ENCODE measurements at regions of chr21 and their contacts with region 1.

Region 1: DNA sequence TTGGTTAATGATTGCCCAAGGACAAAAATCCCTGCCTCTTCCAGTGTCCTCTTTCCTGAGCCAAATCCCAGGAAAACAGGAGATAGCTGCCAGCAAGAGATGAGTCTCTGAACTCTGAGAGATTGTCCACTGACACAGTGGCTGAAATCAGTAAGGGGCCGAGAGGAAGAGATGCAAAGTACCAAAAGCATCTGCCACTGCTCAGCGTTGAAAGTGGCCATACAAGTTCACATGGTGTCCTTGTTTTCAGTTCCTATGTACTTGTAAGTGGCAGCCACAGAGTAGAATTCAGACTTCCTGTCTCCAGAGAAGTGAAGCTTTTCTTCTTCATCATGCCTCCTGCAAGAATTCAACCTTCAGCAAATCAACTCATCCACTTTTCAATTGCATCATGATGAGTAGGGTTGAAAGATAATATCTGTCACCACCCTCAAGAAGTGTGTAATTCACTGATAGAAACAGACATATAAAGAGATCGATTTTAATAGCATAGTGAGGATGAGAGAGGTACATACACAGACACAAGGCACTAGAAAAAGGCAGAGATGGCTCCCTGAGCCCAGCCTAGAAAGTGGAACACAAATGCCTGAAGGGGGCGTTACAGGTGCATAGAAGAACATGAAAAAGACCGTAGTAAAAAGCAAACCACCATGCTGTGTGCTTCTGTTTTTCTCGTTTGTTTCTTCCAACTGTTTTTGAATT is 185.8 kb downstream of the MRPL39 start:
- DNase-seq: peak; percentile 86
- ATAC-seq: peak; percentile 80
- H3K4me3 ChIP-seq: peak overlapping the region in 2 of 5 experiments; percentile 6 to 48
- H3K4me3 Mint-ChIP-seq: peak overlapping the region; percentile 75
- H3K27ac ChIP-seq: peak overlapping the region; percentile 86 to 92
- H3K27ac Mint-ChIP-seq: peak overlapping the region; percentile 90
- H3K4me1 ChIP-seq: peaks cover 31 to 47% of the 10 kb centered on the region in 2 donors
- H3K4me1 Mint-ChIP-seq: peaks cover 46% of the 10 kb centered on the region
- H3K27me3 ChIP-seq: no peaks in the 10 kb centered on the region
- H3K27me3 Mint-ChIP-seq: no peaks in the 10 kb centered on the region
- CTCF ChIP-seq: peak; percentile 85

Region 2: GRCh38 chr21:25457411-25457810 is 35.9 kb after region 1 on chr21:
- CTCF ChIA-PET with region 1: no interaction called
- POLR2A ChIA-PET with region 1: no interaction called
- intact Hi-C with region 1: loop called (anchors 1 kb)
- DNase-seq: peak; percentile 88
- ATAC-seq: peak; percentile 82
- H3K4me3 ChIP-seq: peak overlapping the region in 1 of 5 experiments; percentile 44
- H3K4me3 Mint-ChIP-seq: peak overlapping the region; percentile 62
- H3K27ac ChIP-seq: peak overlapping the region; percentile 90 to 94
- H3K27ac Mint-ChIP-seq: peak overlapping the region; percentile 75
- H3K4me1 ChIP-seq: peaks cover 23 to 26% of the 10 kb centered on the region in 2 donors
- H3K4me1 Mint-ChIP-seq: peaks cover 45% of the 10 kb centered on the region
- H3K27me3 ChIP-seq: no peaks in the 10 kb centered on the region
- H3K27me3 Mint-ChIP-seq: no peaks in the 10 kb centered on the region
- CTCF ChIP-seq: no peak

Region 3: DNA sequence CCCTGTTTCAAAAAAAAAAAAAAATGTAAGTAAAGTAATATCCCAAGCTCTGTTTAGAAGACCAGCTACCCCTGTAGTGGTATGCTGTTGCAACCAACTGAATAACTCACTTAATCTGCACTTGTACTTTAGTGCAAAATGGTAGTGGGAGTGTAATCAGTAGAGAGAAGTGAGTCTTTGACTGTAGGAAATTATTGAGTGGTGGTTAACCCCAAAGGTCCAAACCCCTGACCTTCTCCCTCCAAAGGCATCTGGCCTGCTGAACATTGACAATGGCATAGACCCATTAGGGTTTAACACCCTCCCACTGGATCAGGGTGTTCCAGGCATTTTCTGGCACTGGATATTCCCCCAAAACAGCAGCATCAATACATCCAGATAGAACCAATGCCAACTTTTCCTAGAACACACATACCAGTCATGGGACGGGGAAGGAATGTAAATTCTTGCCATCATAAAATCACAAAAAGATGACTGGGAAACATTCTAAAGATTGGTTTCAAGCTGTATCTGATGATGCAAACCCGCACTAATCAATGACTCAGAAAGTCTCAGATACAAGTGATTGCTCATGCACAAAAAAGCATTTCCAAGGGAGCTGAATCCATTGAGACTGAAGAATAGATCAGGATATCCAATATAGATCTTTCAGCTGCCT is 75.5 kb after region 1 on chr21:
- CTCF ChIA-PET with region 1: no interaction called
- POLR2A ChIA-PET with region 1: no interaction called
- intact Hi-C with region 1: no loop called
- DNase-seq: no peak
- ATAC-seq: no peak
- H3K4me3 ChIP-seq: no peak overlapping the region
- H3K4me3 Mint-ChIP-seq: no peak overlapping the region
- H3K27ac ChIP-seq: no peak overlapping the region
- H3K27ac Mint-ChIP-seq: no peak overlapping the region
- H3K4me1 ChIP-seq: peaks cover 1 to 7% of the 10 kb centered on the region in 2 donors
- H3K4me1 Mint-ChIP-seq: peaks cover 19% of the 10 kb centered on the region
- H3K27me3 ChIP-seq: no peaks in the 10 kb centered on the region
- H3K27me3 Mint-ChIP-seq: no peaks in the 10 kb centered on the region
- CTCF ChIP-seq: no peak

Region 4: DNA sequence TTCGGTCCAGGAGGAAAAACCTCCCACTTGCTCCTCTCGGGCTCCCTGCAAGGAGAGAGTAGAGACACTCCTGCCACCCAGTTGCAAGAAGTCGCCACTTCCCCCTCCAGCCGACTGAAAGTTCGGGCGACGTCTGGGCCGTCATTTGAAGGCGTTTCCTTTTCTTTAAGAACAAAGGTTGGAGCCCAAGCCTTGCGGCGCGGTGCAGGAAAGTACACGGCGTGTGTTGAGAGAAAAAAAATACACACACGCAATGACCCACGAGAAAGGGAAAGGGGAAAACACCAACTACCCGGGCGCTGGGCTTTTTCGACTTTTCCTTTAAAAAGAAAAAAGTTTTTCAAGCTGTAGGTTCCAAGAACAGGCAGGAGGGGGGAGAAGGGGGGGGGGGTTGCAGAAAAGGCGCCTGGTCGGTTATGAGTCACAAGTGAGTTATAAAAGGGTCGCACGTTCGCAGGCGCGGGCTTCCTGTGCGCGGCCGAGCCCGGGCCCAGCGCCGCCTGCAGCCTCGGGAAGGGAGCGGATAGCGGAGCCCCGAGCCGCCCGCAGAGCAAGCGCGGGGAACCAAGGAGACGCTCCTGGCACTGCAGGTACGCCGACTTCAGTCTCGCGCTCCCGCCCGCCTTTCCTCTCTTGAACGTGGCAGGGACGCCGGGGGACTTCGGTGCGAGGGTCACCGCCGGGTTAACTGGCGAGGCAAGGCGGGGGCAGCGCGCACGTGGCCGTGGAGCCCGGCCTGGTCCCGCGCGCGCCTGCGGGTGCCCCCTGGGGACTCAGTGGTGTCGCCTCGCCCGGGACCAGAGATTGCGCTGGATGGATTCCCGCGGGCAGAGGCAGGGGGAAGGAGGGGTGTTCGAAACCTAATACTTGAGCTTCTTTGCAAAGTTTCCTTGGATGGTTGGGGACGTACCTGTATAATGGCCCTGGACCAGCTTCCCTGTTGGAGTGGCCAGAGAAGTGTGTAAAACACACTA is 140.5 kb after region 1 on chr21:
- CTCF ChIA-PET with region 1: interaction called, 14 read pairs
- POLR2A ChIA-PET with region 1: interaction called, 9 read pairs
- intact Hi-C with region 1: loop called (anchors 1 kb)
- DNase-seq: peak; percentile 80
- ATAC-seq: peak; percentile 69
- H3K4me3 ChIP-seq: peak overlapping the region; percentile 61 to 86 (median 70)
- H3K4me3 Mint-ChIP-seq: peak overlapping the region; percentile 100
- H3K27ac ChIP-seq: peak overlapping the region; percentile 78 to 83
- H3K27ac Mint-ChIP-seq: peak overlapping the region; percentile 98
- H3K4me1 ChIP-seq: peaks cover 34 to 42% of the 10 kb centered on the region in 2 donors
- H3K4me1 Mint-ChIP-seq: peaks cover 60% of the 10 kb centered on the region
- H3K27me3 ChIP-seq: no peaks in the 10 kb centered on the region
- H3K27me3 Mint-ChIP-seq: no peaks in the 10 kb centered on the region
- CTCF ChIP-seq: peak; percentile 3

Region 5: DNA sequence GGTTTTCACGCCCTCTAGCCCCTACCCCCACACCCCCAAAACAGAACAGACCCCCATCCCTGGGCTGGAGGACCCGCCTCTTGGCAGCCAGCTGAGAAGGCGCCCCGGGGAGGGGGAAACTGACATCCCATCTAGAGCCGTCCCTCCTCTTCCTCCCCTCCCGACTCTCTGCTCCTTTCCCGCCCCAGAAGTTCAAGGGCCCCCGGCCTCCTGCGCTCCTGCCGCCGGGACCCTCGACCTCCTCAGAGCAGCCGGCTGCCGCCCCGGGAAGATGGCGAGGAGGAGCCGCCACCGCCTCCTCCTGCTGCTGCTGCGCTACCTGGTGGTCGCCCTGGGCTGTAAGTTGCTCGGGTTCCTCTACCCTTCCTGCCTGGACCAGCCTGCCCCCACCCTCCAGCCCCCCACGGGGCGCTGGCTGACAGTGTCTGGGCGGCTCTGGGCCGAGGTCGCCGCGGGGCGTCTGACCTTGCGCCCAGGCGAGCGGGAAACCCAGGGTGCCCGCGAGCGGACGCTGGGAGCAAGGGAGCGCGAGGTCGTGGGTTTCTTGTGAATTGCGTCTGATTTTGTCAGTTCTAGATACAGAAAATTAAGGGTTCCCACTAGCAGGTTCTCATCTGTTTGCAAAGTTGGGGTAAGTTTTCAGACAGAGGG is 218.2 kb after region 1 on chr21:
- CTCF ChIA-PET with region 1: interaction called, 7 read pairs
- POLR2A ChIA-PET with region 1: no interaction called
- intact Hi-C with region 1: loop called (anchors 2 kb)
- DNase-seq: peak; percentile 79
- ATAC-seq: peak; percentile 88
- H3K4me3 ChIP-seq: peak overlapping the region; percentile 32 to 85 (median 69)
- H3K4me3 Mint-ChIP-seq: peak overlapping the region; percentile 84
- H3K27ac ChIP-seq: peak overlapping the region; percentile 58 to 68
- H3K27ac Mint-ChIP-seq: peak overlapping the region; percentile 81
- H3K4me1 ChIP-seq: peaks cover 13 to 14% of the 10 kb centered on the region in 2 donors
- H3K4me1 Mint-ChIP-seq: peaks cover 19% of the 10 kb centered on the region
- H3K27me3 ChIP-seq: no peaks in the 10 kb centered on the region
- H3K27me3 Mint-ChIP-seq: peaks cover 7% of the 10 kb centered on the region
- CTCF ChIP-seq: peak; percentile 53

Region 6: DNA sequence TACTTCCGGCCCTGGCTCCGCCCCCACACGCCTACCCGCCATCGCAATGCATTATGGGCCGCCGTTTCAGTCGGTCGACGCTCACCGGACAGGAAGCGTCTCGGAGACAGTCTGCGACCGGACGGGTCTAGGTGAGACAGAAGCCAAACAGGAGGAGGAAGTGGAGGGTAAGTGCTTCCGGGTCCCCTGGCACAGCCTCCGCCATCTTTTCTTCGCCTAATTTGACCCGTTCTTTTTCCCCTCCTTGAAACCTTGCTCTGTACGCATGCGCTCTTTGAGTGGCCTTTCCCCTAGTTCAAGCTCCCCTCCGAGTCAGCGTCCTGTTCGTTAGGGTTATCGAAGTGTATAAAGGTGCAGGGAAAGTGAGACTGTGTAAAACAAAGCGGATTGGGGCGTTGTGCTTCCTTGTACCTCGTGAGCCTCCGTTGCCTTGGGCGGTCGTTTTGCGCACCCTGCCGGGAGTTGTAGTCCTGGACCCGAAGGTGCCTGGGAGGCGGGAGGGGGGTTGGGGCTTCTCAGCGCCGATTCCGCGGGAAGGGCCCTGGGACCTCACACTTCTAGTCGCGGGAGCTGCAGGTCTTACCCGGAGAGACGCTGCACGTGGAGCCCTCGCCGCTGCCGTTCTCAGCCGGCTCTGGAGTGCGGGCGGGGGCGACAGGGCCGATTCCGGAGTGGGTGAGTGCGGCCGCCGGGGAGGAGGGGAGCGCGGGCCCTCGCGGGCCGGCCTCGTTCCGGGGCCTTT is 313.6 kb after region 1 on chr21 and contains the starts of genes ATP5PF and GABPA:
- CTCF ChIA-PET with region 1: interaction called, 3 read pairs
- POLR2A ChIA-PET with region 1: no interaction called
- intact Hi-C with region 1: loop called (anchors 10 kb)
- DNase-seq: peak; percentile 99
- ATAC-seq: peak; percentile 83
- H3K4me3 ChIP-seq: peak within 1 kb of the TSS; percentile 69 to 99 (median 95)
- H3K4me3 Mint-ChIP-seq: peak within 1 kb of the TSS; percentile 100
- H3K27ac ChIP-seq: peak within 1 kb of the TSS; percentile 86 to 87
- H3K27ac Mint-ChIP-seq: peak within 1 kb of the TSS; percentile 100
- H3K4me1 ChIP-seq: peaks cover 44 to 46% of the 10 kb centered on the region in 2 donors
- H3K4me1 Mint-ChIP-seq: peaks cover 58% of the 10 kb centered on the region
- H3K27me3 ChIP-seq: no peaks in the 10 kb centered on the region
- H3K27me3 Mint-ChIP-seq: no peaks in the 10 kb centered on the region
- CTCF ChIP-seq: no peak
- total RNA-seq, gene ATP5PF: 34.1 and 36.6 TPM in 2 replicates
- total RNA-seq, gene GABPA: 29.7 and 32.9 TPM in 2 replicates